Heart left ventricle (tissue), 16 donors: ENCODE measurements at regions of chr10 and their contacts with region 1.

Region 1: DNA sequence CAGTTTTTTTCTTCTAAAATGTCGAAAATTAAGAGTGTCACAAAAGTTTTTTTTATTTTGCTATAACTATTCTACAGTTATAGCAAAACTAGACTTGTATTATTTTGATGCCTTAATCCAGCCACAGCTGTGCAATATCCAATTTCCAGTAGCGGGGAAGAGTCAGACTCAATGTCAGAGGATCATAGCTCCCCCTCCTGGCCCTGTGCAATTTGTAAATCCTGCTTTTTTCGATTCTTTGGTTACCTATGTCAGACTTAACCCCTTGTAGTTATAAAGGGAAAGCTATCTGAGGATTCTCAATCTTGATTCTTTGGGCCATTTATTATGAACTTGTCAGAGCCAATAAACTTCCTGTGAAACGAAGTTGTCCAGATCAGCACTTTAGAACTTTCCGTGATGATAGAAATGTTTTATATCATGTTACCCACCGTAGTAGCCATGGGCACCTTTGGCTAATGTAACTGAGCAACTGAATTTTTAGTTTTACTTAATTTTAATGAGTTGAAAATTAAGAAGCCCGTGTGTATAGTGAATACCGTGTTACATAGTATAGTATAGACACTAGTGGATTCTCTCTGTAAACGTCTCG is 87.7 kb upstream of the PRKCQ start:
- DNase-seq: no peak
- ATAC-seq: no peak
- H3K4me3 ChIP-seq: no peak overlapping the region
- H3K27ac ChIP-seq: no peak overlapping the region
- H3K4me1 ChIP-seq: peaks cover 0 to 7% (median 0%) of the 10 kb centered on the region in 12 donors
- H3K27me3 ChIP-seq: peaks cover 0 to 27% (median 0%) of the 10 kb centered on the region in 9 donors
- CTCF ChIP-seq: peak in 11 of 12 donors; percentile 13 to 56 (median 30)
- POLR2A ChIP-seq: no peak

Region 2: GRCh38 chr10:6416892-6417512 is 250.8 kb before region 1 on chr10:
- intact Hi-C with region 1: loop called in 7 of 10 experiments (anchors 2 to 10 kb)
- DNase-seq: no peak
- ATAC-seq: peak in 3 of 4 donors; percentile 55 to 69 (median 59)
- H3K4me3 ChIP-seq: no peak overlapping the region
- H3K27ac ChIP-seq: no peak overlapping the region
- H3K4me1 ChIP-seq: no peaks in the 10 kb centered on the region
- H3K27me3 ChIP-seq: peaks cover 0 to 3% (median 0%) of the 10 kb centered on the region in 9 donors
- CTCF ChIP-seq: peak; percentile 44 to 72 (median 56)
- POLR2A ChIP-seq: no peak

Region 3: DNA sequence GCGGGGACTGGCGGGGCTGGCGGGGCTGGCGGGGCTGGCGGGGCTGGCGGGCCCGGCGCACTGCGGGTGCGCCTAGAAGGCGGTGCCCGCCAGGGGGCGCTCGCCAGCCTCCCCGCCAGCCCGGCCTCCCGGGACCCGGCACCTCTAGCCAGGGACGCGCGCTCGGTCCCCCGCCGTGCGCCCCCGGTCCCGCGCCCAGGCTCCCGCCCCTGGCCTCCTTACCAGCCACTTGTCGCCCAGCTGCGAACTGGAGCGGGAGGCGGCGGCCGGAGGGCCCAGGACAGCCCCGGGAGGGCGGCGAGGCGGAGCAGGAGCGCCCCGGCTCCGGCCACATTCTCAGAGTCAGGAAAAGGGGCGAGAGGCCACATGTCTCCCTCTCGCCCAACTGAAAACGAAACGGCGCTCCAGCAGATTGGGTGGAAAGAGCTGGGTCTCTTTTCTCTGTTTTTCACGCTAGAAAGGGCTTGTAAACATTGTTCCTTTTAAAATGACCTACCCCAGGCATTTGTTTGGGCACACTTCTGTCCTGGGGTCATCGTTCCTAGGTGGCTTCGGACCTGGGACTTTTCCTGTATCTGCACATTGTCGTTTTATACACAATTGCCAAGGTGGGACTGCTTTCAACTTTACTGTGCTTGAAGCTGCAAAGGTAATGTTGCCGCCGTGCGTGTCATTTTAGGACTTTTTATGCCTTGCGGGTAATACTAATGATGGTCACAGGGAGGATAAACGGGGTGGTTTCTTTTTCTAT is 87.3 kb before region 1 on chr10:
- intact Hi-C with region 1: loop called in 2 of 10 experiments (anchors 5 to 10 kb)
- DNase-seq: peak; percentile 47 to 90 (median 66)
- ATAC-seq: peak; percentile 47 to 95 (median 81)
- H3K4me3 ChIP-seq: peak overlapping the region; percentile 19 to 70 (median 53)
- H3K27ac ChIP-seq: peak overlapping the region in 1 of 12 donors; percentile 84
- H3K4me1 ChIP-seq: peaks cover 0 to 32% (median 0%) of the 10 kb centered on the region in 12 donors
- H3K27me3 ChIP-seq: peaks cover 0 to 65% (median 30%) of the 10 kb centered on the region in 9 donors
- CTCF ChIP-seq: peak in 11 of 12 donors; percentile 25 to 76 (median 51)
- POLR2A ChIP-seq: no peak